HAP-1 (cell line): ENCODE measurements at regions of chr7 and their contacts with region 1.

Region 1: GRCh38 chr7:47435889-47436312 is 146.0 kb downstream of the TNS3 start:
- DNase-seq: peak; percentile 17 to 62
- H3K4me3 ChIP-seq: no peak overlapping the region
- H3K4me1 ChIP-seq: no peaks in the 10 kb centered on the region; the same call in 1 of the 2 replicates
- H3K27me3 ChIP-seq: no peaks in the 10 kb centered on the region

Region 2: DNA sequence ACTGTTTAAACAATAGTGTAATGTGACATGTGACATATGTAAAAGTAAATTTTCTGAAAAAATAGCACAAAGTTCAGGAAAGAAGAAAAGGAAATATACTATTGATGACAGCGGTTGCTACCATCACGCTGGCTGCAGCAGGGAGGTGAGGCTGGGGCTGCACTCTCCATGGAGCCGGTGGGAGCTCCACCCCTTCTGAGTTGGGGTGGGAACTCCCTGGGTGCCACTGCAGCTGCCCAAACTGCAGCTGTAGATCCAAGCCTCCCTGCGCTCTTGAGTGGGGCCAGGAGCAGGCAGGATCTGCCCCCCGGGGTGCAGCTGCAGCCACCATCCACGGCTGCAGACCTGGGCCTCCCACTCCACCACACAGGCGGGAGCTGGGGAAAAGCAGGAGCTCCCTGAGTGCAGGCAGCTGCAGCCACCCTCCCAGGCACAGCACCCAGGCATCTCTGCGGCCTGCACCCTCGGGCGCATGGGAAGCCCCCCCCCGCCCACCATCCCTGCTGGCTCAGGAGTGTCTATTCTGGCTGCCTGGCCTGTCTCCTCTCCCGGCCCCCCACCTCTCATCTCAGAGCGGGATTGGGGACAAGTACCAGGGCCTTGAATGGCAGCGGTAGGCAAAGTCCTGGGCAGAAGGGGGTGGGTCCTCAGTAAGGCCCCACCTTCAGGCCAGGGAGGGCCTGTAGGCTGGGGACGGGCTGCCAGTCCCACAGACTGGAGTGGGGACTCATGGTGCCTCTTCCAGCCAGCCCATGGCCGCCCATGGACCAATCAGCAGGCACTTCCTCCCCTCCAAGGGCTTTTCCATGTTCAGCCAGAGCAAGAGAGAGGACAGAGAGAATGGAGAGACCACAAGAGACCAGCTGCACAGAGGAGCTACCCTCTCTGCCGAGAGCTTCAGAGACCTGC is 95.9 kb after region 1 on chr7:
- in situ Hi-C with region 1: no loop called
- DNase-seq: no peak
- H3K4me3 ChIP-seq: no peak overlapping the region
- H3K4me1 ChIP-seq: peaks cover 24% of the 10 kb centered on the region
- H3K27me3 ChIP-seq: no peaks in the 10 kb centered on the region

Region 3: DNA sequence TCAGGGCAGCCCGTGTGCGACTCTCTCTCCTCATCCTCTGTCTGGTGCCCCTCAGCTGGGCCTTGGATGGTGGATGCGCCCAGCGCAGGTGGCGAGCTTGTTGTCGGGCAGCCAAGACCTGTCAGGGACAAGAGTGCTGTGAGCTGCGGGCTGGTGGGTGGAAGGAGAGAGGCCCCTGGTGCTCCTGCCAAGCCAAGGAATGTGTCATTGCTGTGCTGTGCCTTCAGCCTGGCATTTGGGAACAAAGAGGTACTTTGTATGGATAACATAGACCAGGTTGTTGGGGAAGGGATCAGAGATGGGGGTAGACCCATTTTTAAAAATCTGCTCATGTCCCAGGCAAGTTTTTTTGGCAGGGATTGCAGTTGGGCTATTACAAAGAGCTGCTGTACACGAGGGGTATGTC is 391.5 kb after region 1 on chr7:
- in situ Hi-C with region 1: loop called (anchors 10 kb)
- DNase-seq: no peak
- H3K4me3 ChIP-seq: no peak overlapping the region
- H3K4me1 ChIP-seq: no peaks in the 10 kb centered on the region
- H3K27me3 ChIP-seq: no peaks in the 10 kb centered on the region

Region 4: DNA sequence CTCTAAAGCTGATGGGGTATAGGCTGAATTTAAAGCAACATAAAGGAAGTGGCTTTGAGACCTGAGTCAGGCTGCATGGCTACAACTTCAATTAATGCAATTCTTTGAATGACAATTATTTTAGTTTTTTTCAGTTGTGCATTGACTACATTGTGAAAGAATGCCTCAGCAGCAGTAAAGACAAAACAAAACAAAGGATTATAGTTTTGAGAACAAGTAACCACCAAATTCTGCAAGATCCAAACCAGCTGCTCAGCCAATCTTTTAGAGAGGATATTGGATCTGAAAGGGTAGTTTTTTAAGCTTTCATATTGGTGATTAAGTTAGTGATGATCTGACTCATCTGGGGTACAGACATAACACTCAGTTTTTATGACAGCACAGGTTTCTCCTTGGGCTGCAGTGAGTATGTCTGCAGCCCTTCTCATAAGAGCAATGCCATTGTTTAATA is 694.8 kb after region 1 on chr7:
- in situ Hi-C with region 1: no loop called
- DNase-seq: no peak
- H3K4me3 ChIP-seq: no peak overlapping the region
- H3K4me1 ChIP-seq: peaks cover 9% of the 10 kb centered on the region
- H3K27me3 ChIP-seq: no peaks in the 10 kb centered on the region